Left cardiac atrium (tissue), 4 donors: ENCODE measurements at regions of chr11 and their contacts with region 1.

Region 1: GRCh38 chr11:73404048-73404447 is 27.8 kb downstream of the RELT start:
- DNase-seq: peak; percentile 71
- ATAC-seq: peak; percentile 82 to 87

Region 2: GRCh38 chr11:73597956-73598718 is 194.1 kb after region 1 on chr11 and contains the start of gene FAM168A:
- intact Hi-C with region 1: loop called in 1 of 2 experiments (anchors 5 kb)
- DNase-seq: peak; percentile 97
- ATAC-seq: peak; percentile 98 to 99
- total RNA-seq, gene FAM168A: 31.5 to 35.2 TPM